ENCODE measurements at regions of chr2 and their contacts with region 1.

Region 1: GRCh38 chr2:175807031-175807873 is 194.8 kb downstream of the LNPK start:
- DNase-seq: peak; percentile 70

Region 2: DNA sequence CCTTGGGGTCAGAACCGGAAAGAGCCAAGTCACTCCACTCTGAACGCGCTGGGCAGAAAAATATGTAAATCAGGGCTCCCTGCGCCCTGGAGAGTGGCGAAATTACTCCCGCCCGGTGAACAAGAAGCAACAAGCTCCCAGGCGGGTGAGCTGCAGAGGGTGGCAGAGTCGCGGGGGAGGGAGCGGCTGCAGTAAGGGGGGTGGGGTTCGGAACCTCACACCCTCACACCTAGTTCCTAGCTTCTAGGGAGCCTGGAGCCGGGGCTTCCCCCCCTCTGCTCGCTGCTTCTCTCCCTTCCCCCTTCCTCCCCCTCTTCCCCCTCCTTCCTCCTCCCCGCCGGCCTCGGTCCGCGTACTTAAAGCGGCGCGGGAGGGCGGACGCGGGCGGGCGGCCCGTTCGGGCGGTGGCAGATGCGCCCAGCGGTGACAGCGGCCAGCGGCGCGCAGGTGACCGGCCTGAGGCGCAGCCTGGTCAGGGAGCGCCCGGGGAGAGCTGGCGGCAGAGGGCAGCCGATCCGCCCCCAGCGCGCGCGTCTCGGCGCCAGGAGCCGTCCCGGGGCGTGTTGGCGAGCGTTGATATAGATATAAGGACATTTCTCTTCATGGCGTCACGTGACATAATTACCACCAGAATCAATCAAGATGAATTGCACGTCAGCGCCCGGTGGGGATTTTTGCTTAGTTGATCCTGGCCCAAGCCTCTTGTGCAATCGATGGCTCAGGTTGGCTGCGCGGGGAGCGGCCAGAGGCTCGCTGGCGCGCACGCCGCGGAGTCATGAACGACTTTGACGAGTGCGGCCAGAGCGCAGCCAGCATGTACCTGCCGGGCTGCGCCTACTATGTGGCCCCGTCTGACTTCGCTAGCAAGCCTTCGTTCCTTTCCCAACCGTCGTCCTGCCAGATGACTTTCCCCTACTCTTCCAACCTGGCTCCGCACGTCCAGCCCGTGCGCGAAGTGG is 299.6 kb after region 1 on chr2 and contains the start of gene HOXD11:
- CTCF ChIA-PET with region 1: no interaction called
- POLR2A ChIA-PET with region 1: interaction called, 17 read pairs
- DNase-seq: peak; percentile 81

Region 3: DNA sequence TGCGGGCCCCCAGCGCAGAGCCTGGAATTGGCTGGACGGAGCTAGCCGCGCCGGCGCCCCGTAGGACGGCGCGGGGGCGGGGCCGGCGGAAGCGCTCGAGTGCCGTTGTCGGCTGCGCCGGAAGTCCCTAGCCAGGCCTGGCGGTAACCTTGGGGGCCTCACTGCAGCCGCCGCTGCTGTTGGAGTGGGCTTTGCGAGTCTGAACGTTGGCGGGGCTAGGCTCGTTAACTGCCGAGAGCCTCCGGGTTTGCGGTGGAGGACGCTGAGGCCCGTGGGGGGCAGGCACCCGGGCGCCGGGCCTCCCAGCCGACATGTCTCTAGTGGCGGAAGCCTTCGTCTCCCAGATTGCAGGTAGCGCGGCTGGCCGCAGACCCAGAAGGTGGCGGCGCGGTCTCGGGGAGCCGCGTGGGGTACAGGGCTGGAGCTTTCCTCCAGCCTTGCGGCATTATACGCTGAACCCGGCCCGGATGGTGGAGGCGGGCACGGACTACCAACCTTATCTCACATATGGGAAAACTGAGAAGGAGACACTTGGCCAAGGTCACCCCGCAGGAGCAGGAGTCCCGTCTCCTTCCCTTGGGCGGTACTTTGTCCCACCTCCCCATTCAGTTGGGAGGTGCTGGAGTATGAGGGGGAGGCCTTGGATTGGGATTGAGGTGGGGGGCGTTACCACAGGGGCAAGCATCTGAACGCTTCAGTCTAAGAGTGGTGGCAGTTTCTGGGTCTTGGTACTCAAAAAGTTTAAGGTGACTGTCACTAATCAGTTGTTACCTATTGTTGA is 462.3 kb after region 1 on chr2 and contains the start of gene MTX2:
- CTCF ChIA-PET with region 1: no interaction called
- POLR2A ChIA-PET with region 1: no interaction called
- DNase-seq: peak; percentile 82

Measured in HEK293T (cell line).